Calu3 (cell line): ENCODE measurements at regions of chr17 and their contacts with region 1.

Region 1: GRCh38 chr17:27654654-27655524 is 23.9 kb downstream of the LGALS9 start:
- DNase-seq: peak; percentile 83
- H3K4me3 Mint-ChIP-seq: no peak overlapping the region
- H3K27ac Mint-ChIP-seq: no peak overlapping the region
- H3K4me1 Mint-ChIP-seq: no peaks in the 10 kb centered on the region
- H3K27me3 Mint-ChIP-seq: peaks cover 34% of the 10 kb centered on the region
- CTCF ChIP-seq: peak; percentile 92

Region 2: DNA sequence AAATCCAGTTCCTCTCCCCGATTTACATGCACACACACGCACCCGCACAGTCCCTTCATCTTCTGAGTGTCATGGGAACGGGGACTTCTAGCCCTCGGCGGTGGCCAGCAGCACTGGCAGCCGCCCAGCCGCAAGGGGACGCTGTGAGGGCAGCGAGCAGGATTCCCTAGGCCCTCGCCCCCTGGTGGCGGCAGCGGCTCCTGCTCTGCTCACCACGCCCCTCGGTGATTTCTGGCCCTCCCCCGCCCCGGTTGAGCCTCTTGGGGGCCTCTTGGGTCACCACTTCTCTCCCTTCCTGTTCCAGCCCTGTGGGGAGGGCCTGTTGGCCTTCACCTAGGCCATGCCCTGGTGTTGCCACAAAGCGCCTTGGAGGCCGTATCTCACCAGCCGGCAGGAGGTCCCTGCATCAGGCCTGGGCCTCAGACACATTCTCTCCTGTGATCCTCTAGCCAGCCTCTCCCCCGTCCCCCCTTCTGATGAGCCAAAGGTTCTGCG is 273.8 kb before region 1 on chr17:
- CTCF ChIA-PET with region 1: no interaction called
- intact Hi-C with region 1: no loop called
- DNase-seq: peak; percentile 87
- H3K4me3 Mint-ChIP-seq: peak overlapping the region; percentile 65
- H3K27ac Mint-ChIP-seq: no peak overlapping the region
- H3K4me1 Mint-ChIP-seq: peaks cover 27% of the 10 kb centered on the region
- H3K27me3 Mint-ChIP-seq: no peaks in the 10 kb centered on the region
- CTCF ChIP-seq: peak; percentile 98

Region 3: DNA sequence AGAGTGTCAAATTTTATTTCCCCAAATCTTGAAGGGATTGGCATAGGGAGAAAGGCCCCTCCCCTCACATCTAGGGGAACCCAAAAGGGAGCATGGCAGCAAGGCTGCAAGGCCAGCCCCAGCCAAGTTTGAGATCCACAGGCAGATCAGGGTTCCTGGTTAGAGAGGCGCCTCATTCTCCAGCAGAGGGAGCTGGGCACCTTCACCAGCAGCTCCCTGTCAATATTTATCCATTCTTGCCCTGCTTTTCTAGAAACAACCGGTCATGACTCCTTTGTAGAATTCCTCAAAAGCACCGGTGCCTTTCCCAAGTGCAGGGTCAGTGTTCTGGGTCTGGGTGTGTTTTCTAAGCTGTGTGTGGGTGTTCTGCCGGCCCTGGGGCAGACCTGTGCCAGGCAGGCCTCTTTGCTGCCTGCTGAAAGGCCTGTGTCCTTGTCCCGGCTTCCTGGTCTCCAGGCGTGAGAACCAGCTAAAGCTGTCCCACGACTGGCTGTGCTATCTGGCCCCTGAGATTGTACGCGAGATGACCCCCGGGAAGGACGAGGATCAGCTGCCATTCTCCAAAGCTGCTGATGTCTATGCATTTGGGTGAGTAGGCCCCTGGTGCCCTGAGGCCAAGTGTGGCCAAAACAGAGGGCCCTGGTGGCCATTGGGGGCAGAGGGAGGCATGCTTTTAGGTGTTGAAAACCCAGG is 45.1 kb before region 1 on chr17:
- CTCF ChIA-PET with region 1: interaction called, 24 read pairs
- intact Hi-C with region 1: loop called (anchors 1 kb)
- DNase-seq: peak; percentile 62
- H3K4me3 Mint-ChIP-seq: no peak overlapping the region
- H3K27ac Mint-ChIP-seq: no peak overlapping the region
- H3K4me1 Mint-ChIP-seq: no peaks in the 10 kb centered on the region
- H3K27me3 Mint-ChIP-seq: no peaks in the 10 kb centered on the region
- CTCF ChIP-seq: peak; percentile 75

Region 4: GRCh38 chr17:27760069-27760885 is 105.4 kb after region 1 on chr17:
- CTCF ChIA-PET with region 1: interaction called, 25 read pairs
- intact Hi-C with region 1: no loop called
- DNase-seq: peak; percentile 75
- H3K4me3 Mint-ChIP-seq: no peak overlapping the region
- H3K27ac Mint-ChIP-seq: no peak overlapping the region
- H3K4me1 Mint-ChIP-seq: no peaks in the 10 kb centered on the region
- H3K27me3 Mint-ChIP-seq: peaks cover 52% of the 10 kb centered on the region
- CTCF ChIP-seq: peak; percentile 90

Region 5: DNA sequence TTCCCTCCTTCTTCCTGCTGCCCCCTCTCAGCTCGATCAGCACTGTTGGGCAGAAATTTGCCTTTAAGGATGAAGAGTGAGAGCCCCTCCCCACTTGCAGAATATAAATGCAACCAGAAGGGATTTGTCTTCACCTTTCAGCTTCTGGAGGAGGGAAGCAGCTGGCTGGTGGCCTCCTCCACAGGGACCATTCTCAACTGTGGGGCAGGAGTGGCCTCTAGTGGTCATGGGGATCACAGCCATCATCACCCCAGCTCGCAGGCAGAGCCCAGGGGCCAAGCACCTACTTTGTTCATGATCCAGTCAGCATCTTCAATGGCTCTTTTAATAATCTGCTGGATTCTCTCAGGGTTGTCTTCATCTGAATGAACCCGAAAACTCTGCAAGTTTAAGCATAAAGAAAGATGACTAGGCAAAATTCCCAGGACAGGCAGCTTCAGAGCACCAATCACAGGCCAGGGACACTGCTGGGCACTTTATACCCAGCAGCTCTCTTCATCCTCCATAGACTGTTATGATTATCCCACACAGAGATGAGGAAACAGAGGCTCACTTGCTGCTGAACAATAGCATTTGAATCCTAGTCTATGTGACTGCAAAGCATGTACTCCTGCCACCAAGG is 225.2 kb after region 1 on chr17:
- CTCF ChIA-PET with region 1: interaction called, 16 read pairs
- intact Hi-C with region 1: loop called (anchors 1 kb)
- DNase-seq: peak; percentile 80
- H3K4me3 Mint-ChIP-seq: no peak overlapping the region
- H3K27ac Mint-ChIP-seq: no peak overlapping the region
- H3K4me1 Mint-ChIP-seq: no peaks in the 10 kb centered on the region
- H3K27me3 Mint-ChIP-seq: peaks cover 32% of the 10 kb centered on the region
- CTCF ChIP-seq: peak; percentile 76